Dendritic cell treated with granulocyte-macrophage colony-stimulating factor and Interleukin-4, amounts not matched to agents 40 ng/mL and 50 ng/mL, for 4 days (primary cell): ENCODE measurements at regions of chr3 and their contacts with region 1.

Region 1: GRCh38 chr3:20039766-20040475 is at the start of gene KAT2B:
- H3K4me3 Mint-ChIP-seq: peak within 1 kb of the TSS; percentile 88
- H3K27ac Mint-ChIP-seq: peak within 1 kb of the TSS; percentile 93
- H3K4me1 Mint-ChIP-seq: peaks cover 35% of the 10 kb centered on the region
- H3K27me3 Mint-ChIP-seq: no peaks in the 10 kb centered on the region

Region 2: DNA sequence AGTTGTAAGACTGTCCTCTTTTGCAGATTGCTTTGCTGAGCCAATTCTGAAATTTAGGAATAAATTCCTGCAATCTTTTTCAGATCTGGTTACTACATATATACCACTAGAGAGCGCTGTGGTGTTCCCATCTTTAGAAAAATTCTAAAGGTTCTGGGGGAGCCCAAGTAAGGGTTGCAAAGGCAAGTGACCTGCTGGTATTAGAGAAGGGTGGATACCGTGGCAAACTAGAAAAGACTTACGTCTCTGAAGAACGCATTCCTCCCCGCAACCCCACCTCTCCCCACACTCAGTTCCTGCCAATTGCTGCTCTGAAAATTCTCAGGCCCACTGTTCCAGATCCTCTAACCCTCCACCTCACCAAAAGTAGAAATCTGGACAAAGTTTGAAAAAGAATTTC is 154.5 kb before region 1 on chr3:
- intact Hi-C with region 1: loop called (anchors 10 kb)
- H3K4me3 Mint-ChIP-seq: no peak overlapping the region
- H3K27ac Mint-ChIP-seq: no peak overlapping the region
- H3K4me1 Mint-ChIP-seq: no peaks in the 10 kb centered on the region
- H3K27me3 Mint-ChIP-seq: no peaks in the 10 kb centered on the region

Region 3: GRCh38 chr3:19994796-19995195 is 45.1 kb before region 1 on chr3:
- intact Hi-C with region 1: no loop called
- H3K4me3 Mint-ChIP-seq: no peak overlapping the region
- H3K27ac Mint-ChIP-seq: no peak overlapping the region
- H3K4me1 Mint-ChIP-seq: no peaks in the 10 kb centered on the region
- H3K27me3 Mint-ChIP-seq: no peaks in the 10 kb centered on the region

Region 4: DNA sequence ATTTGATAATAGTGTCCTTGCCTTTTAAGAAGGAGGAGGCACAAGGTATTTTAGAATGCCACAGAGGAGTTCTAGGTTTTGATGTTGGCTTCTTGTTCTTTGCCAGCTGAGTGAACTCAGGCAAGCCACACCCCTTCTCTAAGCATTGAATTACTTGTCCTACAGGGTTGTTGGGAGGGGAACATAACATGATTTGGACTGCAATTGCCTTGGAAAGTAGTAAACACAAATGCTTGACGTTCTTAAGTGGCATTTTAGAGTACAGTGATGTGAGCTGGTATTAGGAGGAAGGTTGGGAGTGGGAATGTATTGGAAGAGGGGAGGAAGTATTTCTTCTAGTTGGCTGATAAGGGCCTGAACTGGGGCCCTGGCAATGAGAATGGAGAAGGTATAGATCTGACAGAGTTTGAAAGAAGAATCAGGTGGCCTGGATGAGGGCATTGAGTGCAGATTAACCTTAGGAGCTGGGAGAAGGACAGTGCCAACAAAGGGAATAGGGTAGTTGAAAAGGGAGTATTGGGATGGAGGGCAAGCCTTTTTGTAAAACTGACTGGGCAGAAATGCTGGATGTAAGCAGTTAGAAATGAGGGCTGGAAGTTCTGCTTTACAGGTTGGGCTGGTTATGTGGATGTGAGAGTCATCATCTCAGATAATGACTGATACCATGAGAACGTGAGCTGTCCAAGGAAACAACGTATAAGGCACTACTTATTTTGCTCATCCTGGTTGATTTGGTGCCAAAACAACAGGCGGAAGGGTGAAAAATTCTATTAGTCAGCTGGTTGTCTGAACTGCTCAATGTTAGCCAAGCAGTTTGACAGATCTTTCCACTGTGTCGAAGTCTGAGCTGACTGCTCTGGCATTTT is 17.0 kb after region 1 on chr3:
- intact Hi-C with region 1: loop called (anchors 2 kb)
- H3K4me3 Mint-ChIP-seq: no peak overlapping the region
- H3K27ac Mint-ChIP-seq: no peak overlapping the region
- H3K4me1 Mint-ChIP-seq: peaks cover 30% of the 10 kb centered on the region
- H3K27me3 Mint-ChIP-seq: no peaks in the 10 kb centered on the region

Region 5: GRCh38 chr3:20066848-20067617 is 27.1 kb after region 1 on chr3:
- intact Hi-C with region 1: no loop called
- H3K4me3 Mint-ChIP-seq: no peak overlapping the region
- H3K27ac Mint-ChIP-seq: no peak overlapping the region
- H3K4me1 Mint-ChIP-seq: peaks cover 24% of the 10 kb centered on the region
- H3K27me3 Mint-ChIP-seq: no peaks in the 10 kb centered on the region

Region 6: GRCh38 chr3:20104167-20104661 is 64.3 kb after region 1 on chr3:
- intact Hi-C with region 1: loop called (anchors 10 kb)
- H3K4me3 Mint-ChIP-seq: no peak overlapping the region
- H3K27ac Mint-ChIP-seq: peak overlapping the region; percentile 43
- H3K4me1 Mint-ChIP-seq: no peaks in the 10 kb centered on the region
- H3K27me3 Mint-ChIP-seq: no peaks in the 10 kb centered on the region

Region 7: DNA sequence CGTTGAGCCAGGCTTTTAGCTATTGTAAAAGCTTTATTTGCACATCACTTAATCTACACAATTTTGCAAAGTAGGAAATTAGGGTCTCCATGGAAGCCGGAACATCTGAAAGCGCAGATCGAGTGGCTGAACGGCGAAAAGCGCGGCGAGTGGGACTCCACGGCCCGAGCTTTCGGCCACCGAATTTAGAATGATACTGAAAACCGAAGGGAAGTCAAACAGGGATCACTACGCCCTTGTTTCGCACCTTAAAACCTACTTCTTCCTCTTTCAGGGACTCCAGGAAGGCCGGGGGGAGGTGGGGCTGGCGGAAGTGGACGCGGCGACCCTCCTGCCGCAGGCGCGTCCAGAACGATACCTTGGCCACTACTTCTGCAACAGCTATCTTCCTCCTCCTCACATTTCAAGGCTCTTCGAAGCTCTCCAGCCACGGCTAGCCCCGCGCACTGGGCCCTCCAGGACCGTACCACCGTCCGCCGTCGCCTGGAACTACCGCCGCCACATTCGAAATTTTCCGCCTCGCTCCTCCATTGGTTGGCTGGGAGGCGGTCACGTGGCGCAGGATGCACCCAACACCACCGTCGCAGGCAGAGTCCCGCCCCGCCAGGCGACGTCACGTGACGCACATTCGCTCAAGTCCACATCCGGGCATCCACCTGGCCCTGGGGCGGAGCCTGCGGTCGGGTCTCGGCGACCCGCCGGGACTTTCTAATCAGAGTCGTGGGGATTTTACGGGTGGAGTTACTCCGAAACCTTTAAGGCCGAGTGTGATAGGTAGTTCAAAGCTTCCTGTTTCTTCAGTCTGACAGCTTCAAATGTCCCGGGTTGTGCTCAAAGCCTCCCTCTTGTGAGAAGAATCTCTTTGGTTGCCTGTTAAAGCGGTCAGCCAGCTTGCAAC is 146.0 kb after region 1 on chr3 and contains the start of gene SGO1:
- intact Hi-C with region 1: loop called (anchors 1 kb)
- H3K4me3 Mint-ChIP-seq: no peak within 1 kb of the TSS
- H3K27ac Mint-ChIP-seq: no peak within 1 kb of the TSS
- H3K4me1 Mint-ChIP-seq: no peaks in the 10 kb centered on the region
- H3K27me3 Mint-ChIP-seq: no peaks in the 10 kb centered on the region

Region 8: DNA sequence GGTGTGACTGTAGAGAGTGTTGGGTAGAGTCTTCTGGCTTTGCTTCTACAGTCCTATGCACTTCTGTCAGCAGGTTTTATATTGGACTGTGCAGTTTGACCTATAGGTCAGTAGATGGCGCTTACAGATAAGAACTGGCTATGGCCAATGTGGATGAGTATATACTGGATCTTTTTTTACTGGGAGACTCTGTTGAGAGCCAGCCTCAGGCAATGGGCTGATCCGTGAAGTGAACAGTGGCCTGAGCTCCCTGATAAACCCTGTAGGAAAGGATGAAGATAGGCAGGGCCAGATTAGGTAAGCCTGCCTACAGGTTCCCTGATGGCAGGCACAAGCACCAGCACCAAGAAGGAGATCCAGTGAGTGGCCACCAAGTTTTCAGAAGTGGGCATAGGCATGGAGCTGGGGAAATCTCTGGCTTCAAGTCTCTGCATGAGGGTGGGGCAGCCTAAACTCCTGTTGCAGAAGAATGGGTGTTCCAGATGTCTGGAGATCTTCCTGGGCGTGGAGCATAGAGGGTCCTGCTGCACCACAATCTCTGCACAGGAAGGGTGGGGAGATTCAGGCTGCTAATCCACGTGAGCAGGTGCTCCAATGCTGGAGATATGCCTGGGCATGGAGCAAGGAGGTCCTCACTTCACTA is 472.1 kb after region 1 on chr3:
- intact Hi-C with region 1: no loop called
- H3K4me3 Mint-ChIP-seq: no peak overlapping the region
- H3K27ac Mint-ChIP-seq: no peak overlapping the region
- H3K4me1 Mint-ChIP-seq: no peaks in the 10 kb centered on the region
- H3K27me3 Mint-ChIP-seq: no peaks in the 10 kb centered on the region